ENCODE measurements at regions of chr10 and their contacts with region 1.

Region 1: DNA sequence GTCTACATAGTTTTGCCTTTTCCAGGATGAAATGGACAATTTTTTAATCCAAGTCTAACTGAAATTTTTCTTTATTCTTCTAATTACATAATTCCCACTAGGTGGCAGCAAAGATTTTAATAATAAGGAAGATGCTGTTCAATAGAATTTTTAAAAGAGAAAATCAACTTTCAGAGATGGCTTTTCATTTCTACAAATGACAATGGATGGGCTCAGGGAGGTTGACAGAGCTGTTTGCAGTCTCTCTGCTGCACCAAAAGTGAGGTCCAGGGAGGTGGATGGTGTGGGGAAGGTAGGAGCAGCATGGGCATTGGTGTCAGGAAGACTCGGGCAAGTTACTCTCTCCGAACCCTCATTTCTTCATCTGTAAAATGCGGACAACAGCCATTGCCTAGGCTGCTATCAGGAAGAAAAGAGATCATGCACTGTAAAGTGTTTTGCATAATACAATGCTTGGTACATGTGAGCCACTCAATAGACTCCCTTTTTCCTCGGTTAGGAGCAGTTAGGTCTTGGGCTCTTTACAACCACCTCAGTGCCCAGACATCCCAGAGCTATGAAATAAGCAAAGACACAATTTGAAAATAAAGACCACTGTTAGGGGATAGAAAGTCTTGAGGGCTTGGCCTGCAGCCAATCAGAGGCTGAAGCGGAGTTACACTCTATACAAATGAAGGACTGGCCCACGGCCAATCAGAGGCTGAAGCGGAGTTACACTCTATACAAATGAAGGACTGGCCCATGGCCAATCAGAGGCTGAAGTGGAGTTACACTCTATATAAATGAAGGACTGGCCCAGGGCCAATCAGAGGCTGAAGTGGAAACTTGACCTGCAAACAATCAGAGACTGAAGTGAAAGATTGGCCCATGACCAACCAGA is 107.1 kb downstream of the ABLIM1 start:
- DNase-seq: peak; percentile 73
- H3K4me3 ChIP-seq: no peak overlapping the region
- H3K27ac ChIP-seq: no peak overlapping the region
- H3K4me1 ChIP-seq: peaks cover 6% of the 10 kb centered on the region
- H3K27me3 ChIP-seq: no peaks in the 10 kb centered on the region
- CTCF ChIP-seq: peak; percentile 66

Region 2: DNA sequence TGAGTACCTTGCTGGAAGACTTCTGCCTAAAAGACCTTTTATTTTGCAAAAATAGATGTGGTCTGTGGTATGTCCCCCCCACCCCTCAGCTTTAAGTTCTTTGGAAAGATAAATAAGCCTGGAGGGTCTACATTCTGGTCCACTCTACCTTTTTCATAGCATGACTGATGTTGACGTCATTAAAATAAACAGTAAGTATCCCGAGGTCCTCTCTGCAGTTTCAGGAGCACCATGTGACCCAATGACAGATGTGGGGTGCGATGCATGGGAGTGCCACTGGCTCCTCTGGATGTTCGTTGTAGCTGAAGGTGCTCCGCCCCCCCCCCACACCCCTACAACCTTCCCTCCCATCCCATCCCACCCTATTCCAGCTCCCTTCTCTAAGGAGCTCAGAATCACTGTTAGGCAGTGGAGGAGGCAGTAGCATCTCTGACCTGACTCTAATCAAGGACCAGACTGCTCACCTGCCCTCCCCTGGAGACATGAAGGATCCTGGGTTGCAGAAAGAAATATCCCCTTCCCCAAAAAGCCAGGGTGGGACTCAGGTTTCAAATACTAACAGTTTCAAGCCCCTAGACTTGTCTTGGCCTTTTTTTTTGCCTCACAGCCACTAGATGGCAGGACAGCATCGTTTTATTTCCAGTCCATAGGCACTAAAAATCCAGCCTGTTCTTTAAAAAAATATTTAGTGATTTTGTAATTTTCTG is 846.2 kb before region 1 on chr10:
- CTCF ChIA-PET with region 1: no interaction called
- POLR2A ChIA-PET with region 1: no interaction called
- intact Hi-C with region 1: loop called (anchors 10 kb)
- DNase-seq: peak; percentile 80
- H3K4me3 ChIP-seq: no peak overlapping the region
- H3K27ac ChIP-seq: peak overlapping the region; percentile 72
- H3K4me1 ChIP-seq: peaks cover 53% of the 10 kb centered on the region
- H3K27me3 ChIP-seq: no peaks in the 10 kb centered on the region
- CTCF ChIP-seq: peak; percentile 83

Region 3: DNA sequence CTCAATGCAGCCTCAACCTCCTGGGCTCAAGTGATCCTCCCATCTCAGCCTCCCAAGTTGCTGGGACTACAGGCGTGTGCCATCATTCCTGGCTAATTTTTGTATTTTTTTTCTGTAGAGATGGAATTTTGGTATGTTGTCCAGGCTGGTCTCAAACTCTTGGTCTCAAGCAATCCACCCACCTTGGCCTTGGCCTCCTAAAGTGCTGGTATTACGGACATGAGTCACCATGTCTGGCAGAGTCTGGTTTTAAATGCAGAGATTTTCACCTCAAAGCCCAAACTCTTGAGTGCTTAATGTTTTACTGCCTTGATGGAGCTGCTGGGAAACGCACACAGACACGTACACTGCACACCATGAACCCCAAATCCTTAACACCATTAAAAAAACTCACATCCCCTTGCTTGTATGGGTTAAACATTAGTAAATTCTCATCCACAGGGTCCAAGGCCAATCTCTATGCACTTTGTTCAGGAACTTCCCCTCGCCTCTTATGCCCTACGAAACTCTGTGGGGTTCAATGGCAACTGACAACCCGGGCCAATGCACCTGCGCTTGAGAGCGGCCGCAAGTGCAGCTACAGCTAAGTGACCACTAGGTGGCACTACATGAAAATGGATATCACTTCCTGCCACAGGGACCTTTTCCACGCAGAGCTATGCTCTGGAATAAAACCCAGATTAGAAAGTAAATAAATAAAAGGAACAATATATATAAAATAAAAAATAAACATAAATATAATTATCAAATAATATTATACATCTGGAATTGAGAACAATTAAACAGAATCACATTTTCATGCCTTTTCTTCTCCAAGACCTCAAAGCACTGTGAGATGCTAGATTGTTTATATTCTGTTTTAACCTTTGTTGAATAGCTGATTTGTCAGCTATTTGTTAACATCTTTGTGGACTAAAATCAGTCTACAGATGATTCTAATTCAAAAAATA is 79.8 kb before region 1 on chr10:
- CTCF ChIA-PET with region 1: interaction called, 3 read pairs
- POLR2A ChIA-PET with region 1: no interaction called
- intact Hi-C with region 1: loop called (anchors 2 kb)
- DNase-seq: peak; percentile 76
- H3K4me3 ChIP-seq: no peak overlapping the region
- H3K27ac ChIP-seq: no peak overlapping the region
- H3K4me1 ChIP-seq: no peaks in the 10 kb centered on the region
- H3K27me3 ChIP-seq: no peaks in the 10 kb centered on the region
- CTCF ChIP-seq: peak; percentile 89

Region 4: GRCh38 chr10:114663626-114664025 is 112.6 kb after region 1 on chr10:
- CTCF ChIA-PET with region 1: no interaction called
- POLR2A ChIA-PET with region 1: no interaction called
- intact Hi-C with region 1: no loop called
- DNase-seq: no peak
- H3K4me3 ChIP-seq: no peak overlapping the region
- H3K27ac ChIP-seq: no peak overlapping the region
- H3K4me1 ChIP-seq: peaks cover 16% of the 10 kb centered on the region
- H3K27me3 ChIP-seq: no peaks in the 10 kb centered on the region
- CTCF ChIP-seq: no peak

Region 5: DNA sequence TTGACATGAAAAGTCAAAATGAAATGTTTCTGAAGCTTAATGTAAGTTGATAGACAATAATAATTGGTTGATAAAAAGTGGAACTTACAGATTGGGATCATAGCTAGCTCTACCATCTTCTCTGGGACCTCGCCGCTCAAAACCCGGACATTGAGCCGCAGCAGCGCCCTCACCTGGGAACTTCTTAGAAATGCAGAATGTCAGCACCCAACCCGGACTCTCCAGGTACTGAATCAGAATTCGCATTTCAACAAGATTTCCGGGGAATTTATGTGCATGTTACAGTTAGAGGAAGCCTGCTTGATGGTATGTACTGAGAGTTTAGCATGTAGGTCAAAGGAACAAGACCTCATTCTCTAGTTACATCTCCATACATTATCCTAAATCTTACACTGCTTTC is 143.8 kb after region 1 on chr10:
- CTCF ChIA-PET with region 1: interaction called, 7 read pairs
- POLR2A ChIA-PET with region 1: no interaction called
- intact Hi-C with region 1: loop called (anchors 2 kb)
- DNase-seq: peak; percentile 68
- H3K4me3 ChIP-seq: no peak overlapping the region
- H3K27ac ChIP-seq: no peak overlapping the region
- H3K4me1 ChIP-seq: peaks cover 16% of the 10 kb centered on the region
- H3K27me3 ChIP-seq: no peaks in the 10 kb centered on the region
- CTCF ChIP-seq: peak; percentile 84

Region 6: DNA sequence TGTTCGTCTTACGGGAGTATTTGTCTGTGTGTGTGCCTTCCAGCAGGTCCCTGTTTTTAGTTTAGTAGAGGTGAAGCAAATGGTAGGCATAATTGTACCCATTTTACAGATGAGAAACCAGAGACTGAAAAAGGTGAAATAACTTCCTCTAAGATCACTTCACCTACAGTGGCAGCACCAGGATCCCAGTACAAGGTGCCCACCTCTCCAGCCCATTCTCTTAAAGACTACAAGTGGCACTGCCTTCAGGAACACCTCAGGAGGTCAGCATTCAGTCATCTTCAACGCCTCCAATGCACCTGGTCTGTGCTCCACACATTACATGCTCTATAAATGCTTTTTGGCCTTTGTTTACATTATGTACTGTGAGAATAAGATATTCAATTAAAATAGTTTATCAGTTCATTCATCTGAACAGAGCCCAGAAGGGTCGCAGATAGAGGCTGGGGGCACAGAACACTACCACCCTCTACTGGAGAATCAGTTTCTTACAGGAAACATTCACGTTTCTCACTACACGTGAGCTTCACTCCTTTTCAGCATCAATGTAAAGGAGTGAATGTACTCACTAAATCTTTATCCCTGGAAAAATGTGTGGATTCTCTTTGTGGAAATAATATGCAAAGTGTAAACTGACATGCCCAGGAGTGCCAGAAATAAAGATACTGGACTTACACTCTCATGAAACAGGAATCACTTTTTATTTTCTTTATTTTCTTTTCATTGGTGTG is 152.5 kb after region 1 on chr10:
- CTCF ChIA-PET with region 1: interaction called, 10 read pairs
- POLR2A ChIA-PET with region 1: no interaction called
- intact Hi-C with region 1: loop called (anchors 2 kb)
- DNase-seq: peak; percentile 60
- H3K4me3 ChIP-seq: no peak overlapping the region
- H3K27ac ChIP-seq: no peak overlapping the region
- H3K4me1 ChIP-seq: peaks cover 4% of the 10 kb centered on the region
- H3K27me3 ChIP-seq: no peaks in the 10 kb centered on the region
- CTCF ChIP-seq: peak; percentile 73

Region 7: DNA sequence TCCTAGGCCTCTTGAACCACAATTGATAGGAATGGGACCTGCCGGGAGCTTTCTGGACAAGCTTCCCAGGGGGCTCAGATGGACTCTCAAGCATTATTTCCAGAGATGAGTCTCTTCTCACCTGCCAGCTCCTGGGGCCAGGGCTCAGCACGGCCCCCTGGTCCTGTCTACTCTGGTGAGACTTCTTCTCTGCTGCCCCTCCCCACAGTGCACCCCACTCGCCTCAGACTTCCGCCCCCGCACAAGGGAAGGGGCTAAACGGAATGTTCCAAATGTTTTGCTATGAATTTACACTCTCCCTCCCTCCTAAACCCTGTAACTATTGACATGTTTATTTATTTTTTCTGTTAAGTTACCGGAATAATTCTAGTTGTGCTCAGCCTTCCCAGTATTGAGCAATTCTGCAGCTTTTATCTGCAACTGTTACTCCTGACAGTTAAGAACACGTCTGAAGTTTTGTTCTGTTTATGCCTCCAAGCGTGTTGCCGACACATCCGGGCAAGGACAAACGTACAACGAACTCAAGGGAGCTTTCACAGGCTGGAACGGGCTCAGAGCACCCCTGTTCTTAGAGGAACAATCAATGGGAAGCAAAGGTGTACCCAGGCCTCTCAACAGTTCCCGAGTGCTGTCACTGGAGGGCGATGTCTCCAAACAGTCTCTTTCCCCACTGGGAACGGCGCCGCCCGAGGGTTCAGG is 325.8 kb after region 1 on chr10:
- CTCF ChIA-PET with region 1: no interaction called
- POLR2A ChIA-PET with region 1: no interaction called
- intact Hi-C with region 1: loop called (anchors 5 kb)
- DNase-seq: peak; percentile 80
- H3K4me3 ChIP-seq: no peak overlapping the region
- H3K27ac ChIP-seq: no peak overlapping the region
- H3K4me1 ChIP-seq: peaks cover 29% of the 10 kb centered on the region
- H3K27me3 ChIP-seq: no peaks in the 10 kb centered on the region
- CTCF ChIP-seq: peak; percentile 86

Region 8: GRCh38 chr10:115129752-115130151 is 578.8 kb after region 1 on chr10:
- CTCF ChIA-PET with region 1: no interaction called
- POLR2A ChIA-PET with region 1: no interaction called
- intact Hi-C with region 1: loop called (anchors 2 kb)
- DNase-seq: peak; percentile 43
- H3K4me3 ChIP-seq: no peak overlapping the region
- H3K27ac ChIP-seq: no peak overlapping the region
- H3K4me1 ChIP-seq: no peaks in the 10 kb centered on the region
- H3K27me3 ChIP-seq: no peaks in the 10 kb centered on the region
- CTCF ChIP-seq: peak; percentile 60; the same call in 1 of the 2 replicates